ENCODE measurements at regions of chr7 and their contacts with region 1.

Region 1: GRCh38 chr7:48109848-48110663 is 21.0 kb downstream of the UPP1 start:
- DNase-seq: peak; percentile 79 to 96 (median 91)
- ATAC-seq: peak; percentile 98
- H3K4me3 ChIP-seq: no peak overlapping the region
- H3K4me3 Mint-ChIP-seq: no peak overlapping the region
- H3K27ac ChIP-seq: no peak overlapping the region
- H3K27ac Mint-ChIP-seq: peak overlapping the region; percentile 25
- H3K4me1 ChIP-seq: peaks cover 12% of the 10 kb centered on the region
- H3K4me1 Mint-ChIP-seq: peaks cover 10% of the 10 kb centered on the region
- H3K27me3 ChIP-seq: no peaks in the 10 kb centered on the region
- H3K27me3 Mint-ChIP-seq: no peaks in the 10 kb centered on the region
- CTCF ChIP-seq: peak; percentile 98

Region 2: GRCh38 chr7:47968847-47969774 is 140.9 kb before region 1 on chr7:
- CTCF ChIA-PET with region 1: interaction called, 11 read pairs
- POLR2A ChIA-PET with region 1: no interaction called
- intact Hi-C with region 1: no loop called
- DNase-seq: peak; percentile 27 to 73 (median 41)
- ATAC-seq: peak; percentile 89
- H3K4me3 ChIP-seq: no peak overlapping the region
- H3K4me3 Mint-ChIP-seq: no peak overlapping the region
- H3K27ac ChIP-seq: no peak overlapping the region
- H3K27ac Mint-ChIP-seq: peak overlapping the region; percentile 12
- H3K4me1 ChIP-seq: peaks cover 3% of the 10 kb centered on the region
- H3K4me1 Mint-ChIP-seq: peaks cover 49% of the 10 kb centered on the region
- H3K27me3 ChIP-seq: no peaks in the 10 kb centered on the region
- H3K27me3 Mint-ChIP-seq: no peaks in the 10 kb centered on the region
- CTCF ChIP-seq: peak; percentile 74

Region 3: DNA sequence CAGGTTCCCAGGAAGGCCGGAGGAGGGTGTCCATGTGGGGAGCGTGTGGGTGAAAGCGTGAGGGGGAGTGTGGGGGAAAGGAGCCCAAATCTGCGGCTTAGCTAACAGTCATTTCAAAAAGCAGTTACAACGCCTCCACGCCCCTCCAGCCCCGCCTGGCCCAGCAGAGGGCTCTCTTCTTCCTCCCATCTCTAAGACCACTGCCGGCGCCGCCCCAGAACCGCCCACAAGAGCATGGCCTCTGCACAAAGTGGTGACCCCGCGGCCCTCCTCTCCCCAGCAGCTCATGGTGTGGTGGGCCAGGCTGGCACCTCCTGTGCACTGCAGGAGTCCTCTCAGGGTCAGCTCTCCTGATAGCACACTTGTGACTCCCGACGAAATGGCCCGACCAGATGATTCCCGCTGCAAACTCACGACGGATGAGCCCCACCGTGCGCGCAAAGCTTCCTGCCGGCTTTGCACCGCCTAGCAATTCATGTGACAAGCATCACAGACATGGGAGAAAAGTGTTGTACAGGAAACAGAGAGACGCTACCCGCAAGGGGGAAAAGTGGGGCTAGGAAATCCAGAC is 118.2 kb before region 1 on chr7:
- CTCF ChIA-PET with region 1: interaction called, 56 read pairs
- POLR2A ChIA-PET with region 1: interaction called, 26 read pairs
- intact Hi-C with region 1: loop called (anchors 1 kb)
- DNase-seq: peak; percentile 72 to 92 (median 86)
- ATAC-seq: peak; percentile 92
- H3K4me3 ChIP-seq: peak overlapping the region; percentile 74
- H3K4me3 Mint-ChIP-seq: peak overlapping the region; percentile 87
- H3K27ac ChIP-seq: peak overlapping the region; percentile 60 to 70
- H3K27ac Mint-ChIP-seq: peak overlapping the region; percentile 88
- H3K4me1 ChIP-seq: peaks cover 16% of the 10 kb centered on the region
- H3K4me1 Mint-ChIP-seq: peaks cover 24% of the 10 kb centered on the region
- H3K27me3 ChIP-seq: no peaks in the 10 kb centered on the region
- H3K27me3 Mint-ChIP-seq: no peaks in the 10 kb centered on the region
- CTCF ChIP-seq: peak; percentile 72

Region 4: DNA sequence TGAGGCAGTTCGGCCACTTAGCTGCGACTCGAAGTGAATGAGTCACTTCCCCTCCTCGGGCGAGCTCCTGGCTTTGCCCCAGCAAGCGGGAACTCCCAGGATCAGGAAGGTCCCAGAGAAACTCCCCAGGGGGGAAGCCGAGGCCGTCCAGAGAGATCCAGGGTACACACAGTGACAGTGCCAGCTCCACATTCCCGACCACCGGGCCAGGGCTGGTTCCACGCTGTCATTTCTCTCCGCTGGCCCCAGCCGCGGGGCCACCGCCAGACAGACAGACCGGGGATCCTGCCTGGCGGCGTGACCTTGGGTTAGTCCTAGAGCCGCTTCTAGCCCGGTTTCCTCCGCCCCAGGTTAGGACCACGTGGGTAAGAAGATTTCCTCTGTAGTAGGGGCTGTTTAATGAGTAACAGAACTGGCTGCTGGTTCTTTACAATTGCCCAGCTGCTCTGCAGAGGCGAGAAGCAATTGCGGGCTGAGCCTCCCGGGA is 21.5 kb before region 1 on chr7:
- CTCF ChIA-PET with region 1: interaction called, 12 read pairs
- POLR2A ChIA-PET with region 1: interaction called, 13 read pairs
- intact Hi-C with region 1: loop called in 1 of 2 experiments (anchors 2 kb)
- DNase-seq: no peak
- ATAC-seq: peak; percentile 71
- H3K4me3 ChIP-seq: peak overlapping the region; percentile 82
- H3K4me3 Mint-ChIP-seq: peak overlapping the region; percentile 100
- H3K27ac ChIP-seq: peak overlapping the region; percentile 80 to 83
- H3K27ac Mint-ChIP-seq: peak overlapping the region; percentile 96
- H3K4me1 ChIP-seq: peaks cover 82% of the 10 kb centered on the region
- H3K4me1 Mint-ChIP-seq: peaks cover 80% of the 10 kb centered on the region
- H3K27me3 ChIP-seq: no peaks in the 10 kb centered on the region
- H3K27me3 Mint-ChIP-seq: no peaks in the 10 kb centered on the region
- CTCF ChIP-seq: no peak

Measured in CD4-positive, alpha-beta T cell (primary cell).